Activated CD4-positive, alpha-beta T cell treated with anti-CD3 and anti-CD28 coated beads for 36 hours (primary cell): ENCODE measurements at regions of chr5 and their contacts with region 1.

Region 1: DNA sequence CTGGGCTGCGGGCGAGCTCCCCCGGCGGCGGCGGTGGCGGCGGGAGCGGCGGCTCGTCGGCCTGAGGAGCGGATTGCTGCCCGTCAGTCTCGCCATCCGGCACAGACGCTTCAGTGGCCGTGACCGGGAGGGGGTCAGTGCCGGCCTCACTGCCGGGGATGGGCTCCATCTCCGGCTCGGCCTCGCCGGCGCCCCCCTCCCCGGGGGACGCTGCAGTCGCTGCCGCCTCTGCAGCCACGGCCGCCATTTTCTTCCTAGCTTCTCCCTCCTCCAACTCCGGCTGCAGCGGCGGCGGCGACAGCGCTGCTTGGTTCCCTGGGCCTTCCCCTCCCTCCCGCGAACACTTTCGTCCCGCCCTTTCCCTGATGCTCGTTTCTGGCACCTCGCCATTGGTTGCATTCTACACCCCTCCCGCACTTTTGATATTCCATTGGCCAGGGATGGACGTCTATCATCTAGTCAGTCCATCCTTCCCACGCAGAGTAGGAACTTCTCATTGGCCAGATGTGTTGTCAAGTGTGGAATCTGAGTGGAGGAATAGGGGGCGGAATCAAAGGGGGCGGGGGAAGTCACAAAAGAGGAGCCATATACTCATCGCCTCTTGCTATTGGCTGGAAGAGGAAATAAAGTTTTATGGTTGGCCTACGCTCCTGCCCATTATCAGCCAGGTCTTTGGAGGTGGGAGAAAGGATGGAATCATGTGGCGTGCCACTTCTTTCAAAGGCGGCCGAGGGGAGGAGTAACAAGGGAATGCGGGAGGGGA is at the start of gene PWWP2A:
- DNase-seq: peak; percentile 98
- ATAC-seq: peak; percentile 96
- H3K4me3 Mint-ChIP-seq: peak within 1 kb of the TSS; percentile 90
- H3K27ac Mint-ChIP-seq: peak within 1 kb of the TSS; percentile 94
- H3K4me1 Mint-ChIP-seq: peaks cover 16% of the 10 kb centered on the region
- H3K27me3 Mint-ChIP-seq: peaks cover 3% of the 10 kb centered on the region
- total RNA-seq, gene PWWP2A: 14.7 to 24.3 TPM

Region 2: DNA sequence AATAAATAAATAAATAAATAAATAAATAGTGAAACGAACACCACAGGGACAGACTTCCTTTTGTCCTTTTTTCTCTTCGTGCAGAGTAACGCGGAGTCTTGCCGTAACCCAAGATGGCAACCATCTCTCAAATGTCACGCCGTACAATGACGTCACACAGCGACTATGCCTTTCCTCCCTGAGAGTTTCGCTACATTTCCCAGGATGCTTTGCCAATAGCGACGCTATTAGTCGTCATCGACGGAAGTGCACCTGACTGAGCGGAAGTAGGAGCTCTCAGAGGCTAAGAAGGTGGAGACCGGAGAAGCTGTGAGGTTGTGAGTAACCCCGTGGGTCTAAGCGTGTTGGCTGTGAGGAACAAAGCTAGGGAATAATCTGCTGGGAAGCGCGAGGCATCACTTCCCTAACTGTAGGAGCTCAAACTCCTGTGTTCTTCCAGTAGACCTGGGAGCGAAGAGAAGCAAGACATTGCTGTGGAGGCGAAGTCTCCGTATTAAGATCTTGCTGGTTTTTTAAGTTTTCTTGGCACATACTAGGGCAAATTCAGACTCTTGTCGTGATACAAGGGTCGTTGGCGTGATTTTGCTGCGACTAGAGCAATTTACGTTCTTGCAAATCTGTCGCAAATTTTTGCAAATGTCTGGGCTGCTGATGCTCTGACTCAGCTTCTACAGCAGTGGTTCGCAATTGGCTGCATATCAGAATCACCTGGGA is 110.3 kb before region 1 on chr5 and contains the start of gene TTC1:
- CTCF ChIA-PET with region 1: no interaction called
- POLR2A ChIA-PET with region 1: no interaction called
- intact Hi-C with region 1: loop called (anchors 1 kb)
- DNase-seq: peak; percentile 95
- ATAC-seq: peak; percentile 98
- H3K4me3 Mint-ChIP-seq: peak within 1 kb of the TSS; percentile 92
- H3K27ac Mint-ChIP-seq: peak within 1 kb of the TSS; percentile 96
- H3K4me1 Mint-ChIP-seq: peaks cover 26% of the 10 kb centered on the region
- H3K27me3 Mint-ChIP-seq: no peaks in the 10 kb centered on the region
- total RNA-seq, gene TTC1: 60.6 to 63.1 TPM

Region 3: GRCh38 chr5:160399402-160400353 is 280.4 kb after region 1 on chr5 and contains the start of gene FAM200C:
- CTCF ChIA-PET with region 1: no interaction called
- POLR2A ChIA-PET with region 1: no interaction called
- intact Hi-C with region 1: loop called in 1 of 2 experiments (anchors 2 kb)
- DNase-seq: peak; percentile 83
- ATAC-seq: peak; percentile 87
- H3K4me3 Mint-ChIP-seq: peak within 1 kb of the TSS; percentile 86
- H3K27ac Mint-ChIP-seq: peak within 1 kb of the TSS; percentile 86
- H3K4me1 Mint-ChIP-seq: peaks cover 19% of the 10 kb centered on the region
- H3K27me3 Mint-ChIP-seq: no peaks in the 10 kb centered on the region
- total RNA-seq, gene FAM200C: 0.91 to 1.3 TPM

Region 4: GRCh38 chr5:160418561-160419457 is 299.5 kb after region 1 on chr5 and contains the start of gene SLU7:
- CTCF ChIA-PET with region 1: no interaction called
- POLR2A ChIA-PET with region 1: no interaction called
- intact Hi-C with region 1: loop called (anchors 1 to 5 kb)
- DNase-seq: peak; percentile 96
- ATAC-seq: peak; percentile 80
- H3K4me3 Mint-ChIP-seq: peak within 1 kb of the TSS; percentile 96
- H3K27ac Mint-ChIP-seq: peak within 1 kb of the TSS; percentile 99
- H3K4me1 Mint-ChIP-seq: peaks cover 57% of the 10 kb centered on the region
- H3K27me3 Mint-ChIP-seq: no peaks in the 10 kb centered on the region
- total RNA-seq, gene SLU7: 41.1 to 53.0 TPM